ENCODE measurements at regions of chr11 and their contacts with region 1.

Region 1: DNA sequence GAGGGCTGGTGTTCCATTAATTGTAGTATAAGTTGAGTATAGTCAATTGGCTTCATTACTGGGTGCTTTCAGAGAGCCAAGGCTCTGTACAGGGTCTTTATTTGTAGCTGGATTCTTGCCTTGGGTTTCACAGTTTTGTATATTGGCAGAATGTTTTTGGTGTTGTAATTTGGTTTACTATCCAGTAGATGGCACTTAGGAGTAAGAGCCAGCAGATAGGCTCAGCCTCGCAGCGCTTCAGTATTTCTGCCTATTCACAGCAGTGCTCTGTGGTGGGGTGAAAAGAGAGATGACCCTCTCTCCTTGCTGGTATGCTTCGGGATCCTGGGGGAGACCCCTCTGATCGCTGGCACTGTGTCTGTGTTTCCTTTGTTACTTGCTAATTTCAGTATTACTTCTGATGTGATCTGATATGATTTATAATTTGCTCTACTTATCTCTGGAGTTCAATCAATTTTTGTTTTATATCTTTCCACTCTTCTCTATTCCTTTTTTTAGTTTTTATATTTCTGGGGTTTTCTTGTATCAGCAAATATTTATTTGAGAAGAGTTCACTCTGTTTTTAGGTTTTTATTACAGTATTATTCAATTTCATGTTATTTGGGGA is 52.2 kb downstream of the ANO5 start:
- DNase-seq: peak; percentile 18 to 70 (median 47)
- H3K4me3 ChIP-seq: no peak overlapping the region
- H3K27ac ChIP-seq: no peak overlapping the region
- H3K4me1 ChIP-seq: no peaks in the 10 kb centered on the region
- H3K27me3 ChIP-seq: no peaks in the 10 kb centered on the region
- CTCF ChIP-seq: peak; percentile 34 to 68 (median 54)
- POLR2A ChIP-seq: no peak

Region 2: GRCh38 chr11:22317656-22318055 is 72.6 kb after region 1 on chr11:
- intact Hi-C with region 1: loop called in 1 of 2 experiments (anchors 10 kb)
- DNase-seq: no peak
- H3K4me3 ChIP-seq: no peak overlapping the region
- H3K27ac ChIP-seq: no peak overlapping the region
- H3K4me1 ChIP-seq: no peaks in the 10 kb centered on the region
- H3K27me3 ChIP-seq: no peaks in the 10 kb centered on the region
- CTCF ChIP-seq: no peak
- POLR2A ChIP-seq: no peak

Region 3: DNA sequence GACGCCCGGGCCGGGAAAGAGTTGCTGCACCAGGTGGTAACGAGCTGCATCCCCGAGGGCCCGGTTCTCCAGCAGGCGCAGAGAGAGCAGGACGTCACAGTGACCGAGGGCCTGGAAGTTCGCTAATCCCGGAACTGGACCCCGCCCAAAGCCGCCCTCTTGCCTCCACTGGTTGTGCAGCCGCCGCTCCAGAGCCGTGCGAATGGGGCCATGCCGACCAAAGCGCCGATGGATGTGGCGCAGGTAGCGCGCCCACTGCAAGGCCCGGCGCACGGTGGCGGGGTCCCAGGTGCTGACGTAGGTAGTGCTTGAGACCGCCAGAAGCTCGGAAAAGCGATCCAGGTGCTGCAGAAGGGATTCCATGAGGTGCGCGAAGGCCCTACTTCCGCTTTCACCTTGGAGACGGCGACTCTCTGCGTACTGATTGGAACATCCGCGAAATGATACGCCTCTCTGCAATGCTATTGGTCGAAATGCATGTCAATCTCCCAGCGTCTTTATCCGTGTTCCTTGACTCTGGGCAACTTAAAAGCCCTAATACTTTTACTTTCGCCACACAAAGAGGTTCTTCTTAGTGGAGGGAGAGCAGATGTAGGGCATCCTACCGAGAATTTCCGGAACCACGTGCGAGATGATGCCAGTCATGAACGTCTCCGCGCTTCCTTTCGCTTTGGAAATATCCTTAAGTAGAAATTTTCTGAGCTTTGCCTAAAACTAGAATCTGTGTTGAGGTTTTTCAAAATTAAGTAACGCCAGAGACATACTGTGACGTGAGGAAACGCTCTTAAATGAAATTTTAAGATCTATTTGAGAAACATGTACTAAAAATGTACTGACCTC is 380.6 kb after region 1 on chr11 and contains the start of gene FANCF:
- intact Hi-C with region 1: no loop called
- DNase-seq: peak; percentile 93 to 99 (median 98)
- H3K4me3 ChIP-seq: peak within 1 kb of the TSS; percentile 48 to 95 (median 86)
- H3K27ac ChIP-seq: peak within 1 kb of the TSS; percentile 29 to 92 (median 89)
- H3K4me1 ChIP-seq: peaks cover 4 to 15% of the 10 kb centered on the region in 2 donors
- H3K27me3 ChIP-seq: no peaks in the 10 kb centered on the region
- CTCF ChIP-seq: no peak
- POLR2A ChIP-seq: peak; percentile 8 to 57
- total RNA-seq, gene FANCF: 6.0 to 16.1 (median 10.0) TPM

Measured in adrenal gland (tissue), 19 donors.